CD8-positive, alpha-beta memory T cell (primary cell): ENCODE measurements at regions of chr16 and their contacts with region 1.

Region 1: GRCh38 chr16:30458561-30459394 is 13.1 kb upstream of the SEPHS2 start:
- DNase-seq: peak; percentile 50 to 89 (median 71)
- H3K4me3 ChIP-seq: peak overlapping the region; percentile 18
- H3K4me3 Mint-ChIP-seq: peak overlapping the region; percentile 41 to 82 (median 70)
- H3K27ac ChIP-seq: no peak overlapping the region
- H3K27ac Mint-ChIP-seq: peak overlapping the region; percentile 68 to 95 (median 89)
- H3K4me1 ChIP-seq: peaks cover 25% of the 10 kb centered on the region
- H3K4me1 Mint-ChIP-seq: peaks cover 41 to 72% (median 63%) of the 10 kb centered on the region in 3 donors
- H3K27me3 ChIP-seq: no peaks in the 10 kb centered on the region
- H3K27me3 Mint-ChIP-seq: no peaks in the 10 kb centered on the region

Region 2: GRCh38 chr16:30482366-30482765 is 23.6 kb after region 1 on chr16:
- CTCF ChIA-PET with region 1: interaction called, 22 read pairs
- POLR2A ChIA-PET with region 1: interaction called, 19 read pairs
- DNase-seq: no peak
- H3K4me3 ChIP-seq: no peak overlapping the region
- H3K4me3 Mint-ChIP-seq: peak overlapping the region in 5 of 7 donors; percentile 2 to 57 (median 26)
- H3K27ac ChIP-seq: no peak overlapping the region
- H3K27ac Mint-ChIP-seq: peak overlapping the region; percentile 34 to 90 (median 77)
- H3K4me1 ChIP-seq: peaks cover 38% of the 10 kb centered on the region
- H3K4me1 Mint-ChIP-seq: peaks cover 42 to 69% (median 57%) of the 10 kb centered on the region in 3 donors
- H3K27me3 ChIP-seq: no peaks in the 10 kb centered on the region
- H3K27me3 Mint-ChIP-seq: no peaks in the 10 kb centered on the region